MCF 10A (cell line): ENCODE measurements at regions of chr4 and their contacts with region 1.

Region 1: GRCh38 chr4:86593688-86594558 is at the start of gene PTPN13:
- DNase-seq: peak; percentile 100
- H3K4me3 Mint-ChIP-seq: peak within 1 kb of the TSS; percentile 97
- H3K27ac Mint-ChIP-seq: peak within 1 kb of the TSS; percentile 90
- H3K4me1 Mint-ChIP-seq: peaks cover 32% of the 10 kb centered on the region
- H3K27me3 Mint-ChIP-seq: no peaks in the 10 kb centered on the region
- CTCF ChIP-seq: no peak
- total RNA-seq, gene PTPN13: 23.0 and 28.3 TPM in 2 replicates

Region 2: DNA sequence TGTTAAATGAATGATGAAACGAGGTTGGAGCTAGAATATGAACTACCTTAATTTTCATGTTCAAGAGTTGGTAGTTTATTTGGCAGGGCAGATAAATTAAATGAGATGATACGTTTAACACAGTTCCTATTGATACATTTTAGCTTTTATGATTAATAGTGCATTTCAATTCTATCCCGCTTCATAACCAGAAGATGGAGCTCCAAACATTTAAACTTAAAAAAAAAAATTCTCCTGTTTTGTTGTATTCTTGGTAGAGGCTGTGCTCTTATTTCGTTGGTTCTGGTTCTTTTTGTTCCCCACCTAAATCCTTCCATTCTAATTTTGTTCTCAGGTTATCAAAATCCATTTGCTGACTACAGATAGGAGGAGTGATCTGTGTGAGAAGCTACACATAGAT is 71.6 kb before region 1 on chr4:
- CTCF ChIA-PET with region 1: interaction called, 27 read pairs
- POLR2A ChIA-PET with region 1: interaction called, 53 read pairs
- intact Hi-C with region 1: loop called (anchors 1 kb)
- DNase-seq: peak; percentile 17
- H3K4me3 Mint-ChIP-seq: no peak overlapping the region
- H3K27ac Mint-ChIP-seq: no peak overlapping the region
- H3K4me1 Mint-ChIP-seq: no peaks in the 10 kb centered on the region
- H3K27me3 Mint-ChIP-seq: no peaks in the 10 kb centered on the region
- CTCF ChIP-seq: peak; percentile 43

Region 3: GRCh38 chr4:86557526-86557925 is 36.4 kb before region 1 on chr4:
- CTCF ChIA-PET with region 1: interaction called, 5 read pairs
- POLR2A ChIA-PET with region 1: interaction called, 25 read pairs
- intact Hi-C with region 1: loop called (anchors 5 kb)
- DNase-seq: peak; percentile 52
- H3K4me3 Mint-ChIP-seq: no peak overlapping the region
- H3K27ac Mint-ChIP-seq: peak overlapping the region; percentile 97
- H3K4me1 Mint-ChIP-seq: peaks cover 21% of the 10 kb centered on the region
- H3K27me3 Mint-ChIP-seq: no peaks in the 10 kb centered on the region
- CTCF ChIP-seq: no peak

Region 4: GRCh38 chr4:86670739-86671138 is 76.8 kb after region 1 on chr4:
- CTCF ChIA-PET with region 1: no interaction called
- POLR2A ChIA-PET with region 1: interaction called, 21 read pairs
- intact Hi-C with region 1: no loop called
- DNase-seq: peak; percentile 88
- H3K4me3 Mint-ChIP-seq: peak overlapping the region; percentile 11
- H3K27ac Mint-ChIP-seq: peak overlapping the region; percentile 85
- H3K4me1 Mint-ChIP-seq: peaks cover 14% of the 10 kb centered on the region
- H3K27me3 Mint-ChIP-seq: no peaks in the 10 kb centered on the region
- CTCF ChIP-seq: no peak

Region 5: GRCh38 chr4:86706923-86707597 is 113.1 kb after region 1 on chr4:
- CTCF ChIA-PET with region 1: interaction called, 4 read pairs
- POLR2A ChIA-PET with region 1: interaction called, 7 read pairs
- intact Hi-C with region 1: loop called (anchors 5 kb)
- DNase-seq: peak; percentile 13
- H3K4me3 Mint-ChIP-seq: no peak overlapping the region
- H3K27ac Mint-ChIP-seq: peak overlapping the region; percentile 17
- H3K4me1 Mint-ChIP-seq: peaks cover 6% of the 10 kb centered on the region
- H3K27me3 Mint-ChIP-seq: no peaks in the 10 kb centered on the region
- CTCF ChIP-seq: no peak

Region 6: GRCh38 chr4:86757468-86757867 is 163.5 kb after region 1 on chr4:
- CTCF ChIA-PET with region 1: no interaction called
- POLR2A ChIA-PET with region 1: interaction called, 3 read pairs
- intact Hi-C with region 1: loop called (anchors 10 kb)
- DNase-seq: peak; percentile 27
- H3K4me3 Mint-ChIP-seq: no peak overlapping the region
- H3K27ac Mint-ChIP-seq: no peak overlapping the region
- H3K4me1 Mint-ChIP-seq: peaks cover 5% of the 10 kb centered on the region
- H3K27me3 Mint-ChIP-seq: no peaks in the 10 kb centered on the region
- CTCF ChIP-seq: no peak

Region 7: GRCh38 chr4:86810862-86811261 is 216.9 kb after region 1 on chr4:
- CTCF ChIA-PET with region 1: no interaction called
- POLR2A ChIA-PET with region 1: no interaction called
- intact Hi-C with region 1: no loop called
- DNase-seq: no peak
- H3K4me3 Mint-ChIP-seq: no peak overlapping the region
- H3K27ac Mint-ChIP-seq: no peak overlapping the region
- H3K4me1 Mint-ChIP-seq: no peaks in the 10 kb centered on the region
- H3K27me3 Mint-ChIP-seq: no peaks in the 10 kb centered on the region
- CTCF ChIP-seq: no peak